ENCODE measurements at regions of chr9 and their contacts with region 1.

Region 1: GRCh38 chr9:32841314-32841713 is 58.0 kb downstream of the TMEM215 start:
- DNase-seq: no peak
- ATAC-seq: peak; percentile 42; the same call in 1 of the 2 replicates
- H3K4me3 ChIP-seq: no peak overlapping the region
- H3K27ac ChIP-seq: no peak overlapping the region
- H3K4me1 ChIP-seq: no peaks in the 10 kb centered on the region
- H3K27me3 ChIP-seq: no peaks in the 10 kb centered on the region; the same call in 1 of the 2 replicates
- CTCF ChIP-seq: no peak
- POLR2A ChIP-seq: no peak
- RAD21 ChIP-seq: no peak

Region 2: DNA sequence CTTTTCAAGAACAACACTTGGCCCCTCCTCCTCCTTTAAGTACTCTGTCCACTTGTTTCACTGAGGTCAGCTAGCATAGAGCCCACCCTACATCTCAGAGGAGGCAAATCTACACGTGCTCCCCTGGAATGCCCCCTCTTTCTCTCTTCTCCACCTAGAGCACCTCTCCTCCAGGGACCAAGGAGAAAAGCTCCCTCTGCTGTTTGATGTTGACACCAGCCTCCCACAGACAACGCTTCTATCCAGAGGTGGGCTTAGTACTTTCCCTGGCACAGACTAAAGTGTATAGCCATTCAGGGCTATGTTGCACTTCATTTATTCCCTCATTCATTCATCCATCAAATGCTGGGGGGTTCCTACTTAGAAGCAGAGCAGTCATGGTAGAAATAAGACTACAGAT is 137.7 kb before region 1 on chr9:
- CTCF ChIA-PET with region 1: no interaction called
- POLR2A ChIA-PET with region 1: no interaction called
- RAD21 ChIA-PET with region 1: no interaction called
- intact Hi-C with region 1: loop called (anchors 10 kb)
- DNase-seq: no peak
- ATAC-seq: peak; percentile 78
- H3K4me3 ChIP-seq: no peak overlapping the region
- H3K27ac ChIP-seq: no peak overlapping the region
- H3K4me1 ChIP-seq: peaks cover 6 to 9% of the 10 kb centered on the region in 2 experiments; a peak in 3 of 4 replicates
- H3K27me3 ChIP-seq: peaks cover 15% of the 10 kb centered on the region; the same call in 1 of the 2 replicates
- CTCF ChIP-seq: peak; percentile 52 to 57 (median 56); a peak in 5 of 6 replicates
- POLR2A ChIP-seq: no peak
- RAD21 ChIP-seq: peak; percentile 65

Region 3: DNA sequence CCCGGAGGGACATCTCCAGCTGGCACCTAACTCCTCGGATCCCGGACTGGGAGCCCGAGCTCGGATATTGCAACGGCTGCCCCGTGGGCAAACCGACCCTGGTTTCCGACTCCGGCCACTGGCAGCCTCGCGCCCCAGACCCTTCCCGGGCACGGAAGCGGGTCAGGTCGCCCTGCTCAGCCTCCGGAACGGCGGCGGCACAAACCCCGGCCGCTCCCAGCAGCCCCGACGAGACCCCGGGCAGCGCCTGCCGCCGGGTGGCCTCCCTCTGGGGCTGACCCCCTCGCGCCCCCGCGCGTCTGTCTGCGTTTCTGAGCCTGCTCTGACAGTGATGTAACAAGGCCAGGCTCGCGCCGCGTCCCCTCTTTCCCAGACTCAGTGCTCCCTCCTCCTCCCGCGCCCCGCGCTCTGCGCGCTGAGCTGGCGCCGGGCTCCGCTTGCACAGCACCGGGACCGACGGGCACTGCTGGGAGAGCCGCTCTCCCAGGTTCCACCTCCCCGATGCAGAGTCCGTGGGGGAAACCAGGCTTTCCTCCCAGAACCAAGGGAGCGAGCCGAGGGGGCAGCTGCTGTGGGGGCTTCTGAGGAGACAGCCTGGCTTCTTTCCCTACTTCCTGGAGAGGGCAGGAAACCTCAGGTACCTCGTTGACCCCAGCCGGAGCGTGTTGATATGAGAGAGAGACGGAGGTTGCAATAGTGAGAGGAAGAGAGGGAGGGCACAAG is 58.0 kb before region 1 on chr9 and contains the start of gene TMEM215:
- CTCF ChIA-PET with region 1: no interaction called
- POLR2A ChIA-PET with region 1: no interaction called
- RAD21 ChIA-PET with region 1: no interaction called
- intact Hi-C with region 1: loop called (anchors 10 kb)
- DNase-seq: no peak
- ATAC-seq: no peak
- H3K4me3 ChIP-seq: no peak within 1 kb of the TSS
- H3K27ac ChIP-seq: no peak within 1 kb of the TSS
- H3K4me1 ChIP-seq: no peaks in the 10 kb centered on the region
- H3K27me3 ChIP-seq: peaks cover 63% of the 10 kb centered on the region
- CTCF ChIP-seq: no peak
- POLR2A ChIP-seq: no peak
- RAD21 ChIP-seq: no peak
- total RNA-seq, gene TMEM215: not detected

Region 4: DNA sequence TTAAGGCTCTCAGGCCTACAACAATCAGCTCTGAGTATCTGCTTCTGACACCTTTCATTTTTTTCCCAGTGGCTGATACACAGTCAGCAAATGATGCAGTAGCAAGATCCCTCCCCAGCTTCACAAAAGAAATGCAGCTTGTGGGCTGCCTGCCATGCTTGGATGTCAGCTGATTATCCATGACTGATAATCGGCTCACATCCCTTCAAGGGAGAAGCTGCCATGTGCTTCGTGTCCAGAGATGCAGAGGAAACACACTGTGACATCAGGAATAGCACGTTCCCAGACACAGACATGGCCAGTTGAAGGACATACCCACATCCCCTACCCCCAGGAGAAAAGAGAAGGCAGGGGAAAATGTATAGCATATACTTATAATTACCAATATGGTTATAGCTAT is 30.1 kb before region 1 on chr9:
- CTCF ChIA-PET with region 1: no interaction called
- POLR2A ChIA-PET with region 1: no interaction called
- RAD21 ChIA-PET with region 1: no interaction called
- intact Hi-C with region 1: loop called (anchors 5 kb)
- DNase-seq: no peak
- ATAC-seq: no peak
- H3K4me3 ChIP-seq: no peak overlapping the region
- H3K27ac ChIP-seq: no peak overlapping the region
- H3K4me1 ChIP-seq: no peaks in the 10 kb centered on the region
- H3K27me3 ChIP-seq: peaks cover 6% of the 10 kb centered on the region; the same call in 1 of the 2 replicates
- CTCF ChIP-seq: no peak
- POLR2A ChIP-seq: no peak
- RAD21 ChIP-seq: no peak

Region 5: GRCh38 chr9:32854271-32854670 is 13.0 kb after region 1 on chr9:
- CTCF ChIA-PET with region 1: no interaction called
- POLR2A ChIA-PET with region 1: no interaction called
- RAD21 ChIA-PET with region 1: no interaction called
- intact Hi-C with region 1: no loop called
- DNase-seq: no peak
- ATAC-seq: no peak
- H3K4me3 ChIP-seq: no peak overlapping the region
- H3K27ac ChIP-seq: no peak overlapping the region
- H3K4me1 ChIP-seq: no peaks in the 10 kb centered on the region
- H3K27me3 ChIP-seq: peaks cover 41% of the 10 kb centered on the region
- CTCF ChIP-seq: no peak
- POLR2A ChIP-seq: no peak
- RAD21 ChIP-seq: no peak

Measured in HCT116 (cell line).